ENCODE measurements at regions of chr13 and their contacts with region 1.

Region 1: GRCh38 chr13:40251343-40252032 is 415.0 kb downstream of the FOXO1 start:
- DNase-seq: peak; percentile 58
- H3K4me3 Mint-ChIP-seq: no peak overlapping the region
- H3K27ac Mint-ChIP-seq: no peak overlapping the region
- H3K4me1 Mint-ChIP-seq: peaks cover 35% of the 10 kb centered on the region
- H3K27me3 Mint-ChIP-seq: no peaks in the 10 kb centered on the region
- CTCF ChIP-seq: no peak

Region 2: GRCh38 chr13:40318366-40318765 is 66.9 kb after region 1 on chr13:
- CTCF ChIA-PET with region 1: no interaction called
- POLR2A ChIA-PET with region 1: no interaction called
- intact Hi-C with region 1: loop called (anchors 10 kb)
- DNase-seq: peak; percentile 70
- H3K4me3 Mint-ChIP-seq: no peak overlapping the region
- H3K27ac Mint-ChIP-seq: no peak overlapping the region
- H3K4me1 Mint-ChIP-seq: peaks cover 18% of the 10 kb centered on the region
- H3K27me3 Mint-ChIP-seq: no peaks in the 10 kb centered on the region
- CTCF ChIP-seq: no peak

Measured in MCF 10A (cell line).